ENCODE measurements at regions of chr1 and their contacts with region 1.

Region 1: DNA sequence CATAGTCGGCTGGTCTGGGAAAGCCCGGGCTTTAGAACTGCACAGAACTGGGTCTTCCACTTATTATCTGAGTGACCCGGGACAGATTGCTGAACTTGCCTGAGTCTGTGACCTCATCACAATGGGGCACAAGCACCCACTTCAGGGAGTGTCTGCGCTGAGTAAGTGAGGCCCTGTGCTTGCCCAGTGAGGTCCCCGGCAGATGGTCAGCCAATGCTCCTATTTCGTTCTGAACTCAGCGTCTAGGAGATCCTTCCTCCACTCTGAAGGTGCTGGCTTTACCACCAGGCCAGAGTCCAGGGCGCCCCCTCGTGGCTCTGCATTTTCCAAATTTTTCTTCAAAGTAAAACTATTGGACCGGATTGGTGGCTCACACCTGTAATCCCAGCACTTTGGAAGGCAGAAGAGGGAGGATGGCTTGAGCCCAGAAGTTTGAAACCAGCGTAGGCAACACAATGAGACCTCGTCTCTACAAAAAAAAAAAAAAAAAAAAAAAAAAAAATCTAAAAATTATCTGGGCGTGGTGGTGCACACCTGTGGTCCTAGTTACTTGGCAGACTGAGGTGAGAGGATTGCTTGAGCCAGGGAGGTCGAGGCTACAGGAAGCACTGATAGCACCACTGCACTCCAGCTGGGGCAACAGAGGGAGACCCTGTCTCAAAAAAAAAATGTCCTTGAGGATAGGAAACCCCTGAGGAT is 61.7 kb downstream of the FCRL5 start:
- DNase-seq: peak; percentile 60 to 95 (median 84)
- ATAC-seq: peak; percentile 85
- H3K4me3 ChIP-seq: no peak overlapping the region
- H3K4me1 ChIP-seq: no peaks in the 10 kb centered on the region
- CTCF ChIP-seq: no peak

Region 2: DNA sequence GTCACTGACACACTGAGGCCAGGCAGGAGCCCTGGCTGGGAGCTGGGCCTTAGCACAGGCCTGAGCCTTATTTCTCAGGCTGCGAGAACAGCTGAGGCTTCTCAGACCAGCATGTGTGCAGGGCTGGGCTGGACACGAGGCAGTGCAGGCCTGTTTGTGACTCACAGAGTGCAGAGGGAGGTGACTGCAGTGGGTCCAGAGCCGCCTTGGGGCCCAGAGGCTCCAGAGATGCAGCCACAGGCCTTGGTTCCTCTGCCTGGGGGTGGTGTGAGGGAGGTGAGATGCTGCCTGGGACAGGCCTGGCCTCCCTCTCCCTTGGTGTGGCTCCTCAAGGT is 291.2 kb before region 1 on chr1:
- intact Hi-C with region 1: loop called in 1 of 2 experiments (anchors 5 kb)
- DNase-seq: no peak
- ATAC-seq: no peak
- H3K4me3 ChIP-seq: no peak overlapping the region
- H3K4me1 ChIP-seq: no peaks in the 10 kb centered on the region
- CTCF ChIP-seq: no peak

Region 3: GRCh38 chr1:157369808-157370521 is 120.7 kb before region 1 on chr1:
- intact Hi-C with region 1: loop called (anchors 5 kb)
- DNase-seq: peak in 1 of 3 donors; percentile 87
- ATAC-seq: peak; percentile 94
- H3K4me3 ChIP-seq: no peak overlapping the region
- H3K4me1 ChIP-seq: peaks cover 22% of the 10 kb centered on the region
- CTCF ChIP-seq: peak; percentile 82

Measured in mucosa of descending colon (tissue), 3 donors.